Spleen (tissue), 13 donors: ENCODE measurements at regions of chr17 and their contacts with region 1.

Region 1: DNA sequence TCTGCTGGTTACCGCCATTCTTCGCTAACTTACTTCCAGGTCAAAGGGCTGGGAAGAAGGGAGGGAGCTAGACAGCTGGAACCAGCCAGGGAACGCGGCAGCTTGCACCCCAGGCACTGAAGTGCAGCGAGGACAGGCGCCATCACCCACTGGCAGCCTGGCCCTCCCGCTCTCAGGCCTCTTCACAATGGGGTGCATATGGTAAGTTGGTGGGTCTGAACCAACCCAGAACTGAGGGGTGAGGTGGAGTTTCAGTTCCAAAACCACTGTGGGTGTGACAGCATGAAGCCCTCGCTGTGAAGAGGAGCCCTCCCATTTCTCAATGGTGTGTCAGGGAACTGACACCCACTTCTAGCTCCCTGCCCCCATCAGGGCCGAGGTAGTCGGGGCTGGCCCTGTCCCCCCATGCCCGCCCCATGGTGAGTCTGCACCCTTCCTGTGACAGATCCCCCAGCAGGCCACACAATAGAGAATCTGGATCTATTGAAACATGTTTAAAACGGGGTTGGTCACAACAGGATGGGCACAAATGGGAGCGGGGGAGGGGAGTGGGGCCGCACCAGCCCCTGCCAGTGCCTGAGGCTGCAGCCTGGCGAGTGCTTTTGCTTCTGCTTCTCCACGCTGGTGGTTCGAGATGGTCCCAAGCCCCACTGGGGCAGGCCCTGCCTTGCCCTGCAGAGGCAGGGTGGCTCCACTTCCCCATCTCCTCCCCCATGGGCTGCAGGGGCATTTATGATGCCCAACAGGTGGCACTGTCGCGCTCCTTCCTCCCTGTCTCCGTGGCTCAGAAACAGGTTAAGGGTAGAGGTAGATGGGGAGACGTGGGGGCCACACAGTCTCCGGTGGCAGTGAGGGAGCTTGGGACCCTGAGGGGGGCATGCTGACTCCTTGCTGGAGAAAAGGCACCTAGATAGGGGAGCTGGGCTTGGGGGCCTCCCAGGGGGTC is 2.3 kb downstream of the LIMD2 start:
- DNase-seq: peak; percentile 96
- H3K4me3 ChIP-seq: peak overlapping the region; percentile 80 to 99 (median 90)
- H3K27ac ChIP-seq: peak overlapping the region; percentile 93 to 100 (median 98)
- H3K4me1 ChIP-seq: peaks cover 47 to 93% (median 68%) of the 10 kb centered on the region in 6 donors
- H3K27me3 ChIP-seq: no peaks in the 10 kb centered on the region
- CTCF ChIP-seq: peak; percentile 72 to 95 (median 87)
- POLR2A ChIP-seq: peak in 2 of 3 donors; percentile 22 to 28

Region 2: GRCh38 chr17:63621766-63622519 is 75.7 kb before region 1 on chr17 and contains the start of gene MAP3K3:
- intact Hi-C with region 1: loop called (anchors 10 kb)
- DNase-seq: peak; percentile 99
- H3K4me3 ChIP-seq: peak within 1 kb of the TSS; percentile 50 to 83 (median 76)
- H3K27ac ChIP-seq: peak within 1 kb of the TSS; percentile 83 to 96 (median 88)
- H3K4me1 ChIP-seq: peaks cover 22 to 50% (median 45%) of the 10 kb centered on the region in 6 donors
- H3K27me3 ChIP-seq: no peaks in the 10 kb centered on the region
- CTCF ChIP-seq: peak in 6 of 11 experiments; percentile 33 to 63 (median 50)
- POLR2A ChIP-seq: peak in 1 of 3 donors; percentile 81
- total RNA-seq, gene MAP3K3: 69.9 to 125 (median 94.9) TPM

Region 3: GRCh38 chr17:63741221-63742049 is 43.8 kb after region 1 on chr17 and contains the start of gene STRADA:
- intact Hi-C with region 1: loop called (anchors 10 kb)
- DNase-seq: peak; percentile 100
- H3K4me3 ChIP-seq: peak within 1 kb of the TSS; percentile 52 to 96 (median 80)
- H3K27ac ChIP-seq: peak within 1 kb of the TSS; percentile 80 to 99 (median 98)
- H3K4me1 ChIP-seq: peaks cover 7 to 65% (median 16%) of the 10 kb centered on the region in 6 donors
- H3K27me3 ChIP-seq: no peaks in the 10 kb centered on the region
- CTCF ChIP-seq: peak in 4 of 11 experiments; percentile 5 to 40 (median 16)
- POLR2A ChIP-seq: peak; percentile 47 to 83 (median 79)
- total RNA-seq, gene STRADA: 43.9 to 72.0 (median 60.7) TPM

Region 4: GRCh38 chr17:63827002-63827771 is 129.6 kb after region 1 on chr17 and contains the starts of genes FTSJ3 and PSMC5:
- intact Hi-C with region 1: loop called (anchors 10 kb)
- DNase-seq: peak; percentile 99
- H3K4me3 ChIP-seq: peak within 1 kb of the TSS; percentile 85 to 98 (median 92)
- H3K27ac ChIP-seq: peak within 1 kb of the TSS; percentile 88 to 94 (median 94)
- H3K4me1 ChIP-seq: peaks cover 25 to 92% (median 62%) of the 10 kb centered on the region in 6 donors
- H3K27me3 ChIP-seq: no peaks in the 10 kb centered on the region
- CTCF ChIP-seq: peak in 9 of 11 experiments; percentile 34 to 71 (median 64)
- POLR2A ChIP-seq: peak; percentile 20 to 76 (median 54)
- total RNA-seq, gene FTSJ3: 26.1 to 45.7 (median 37.7) TPM
- total RNA-seq, gene PSMC5: 74.5 to 102 (median 97.2) TPM